ENCODE measurements at regions of chr10 and their contacts with region 1.

Region 1: DNA sequence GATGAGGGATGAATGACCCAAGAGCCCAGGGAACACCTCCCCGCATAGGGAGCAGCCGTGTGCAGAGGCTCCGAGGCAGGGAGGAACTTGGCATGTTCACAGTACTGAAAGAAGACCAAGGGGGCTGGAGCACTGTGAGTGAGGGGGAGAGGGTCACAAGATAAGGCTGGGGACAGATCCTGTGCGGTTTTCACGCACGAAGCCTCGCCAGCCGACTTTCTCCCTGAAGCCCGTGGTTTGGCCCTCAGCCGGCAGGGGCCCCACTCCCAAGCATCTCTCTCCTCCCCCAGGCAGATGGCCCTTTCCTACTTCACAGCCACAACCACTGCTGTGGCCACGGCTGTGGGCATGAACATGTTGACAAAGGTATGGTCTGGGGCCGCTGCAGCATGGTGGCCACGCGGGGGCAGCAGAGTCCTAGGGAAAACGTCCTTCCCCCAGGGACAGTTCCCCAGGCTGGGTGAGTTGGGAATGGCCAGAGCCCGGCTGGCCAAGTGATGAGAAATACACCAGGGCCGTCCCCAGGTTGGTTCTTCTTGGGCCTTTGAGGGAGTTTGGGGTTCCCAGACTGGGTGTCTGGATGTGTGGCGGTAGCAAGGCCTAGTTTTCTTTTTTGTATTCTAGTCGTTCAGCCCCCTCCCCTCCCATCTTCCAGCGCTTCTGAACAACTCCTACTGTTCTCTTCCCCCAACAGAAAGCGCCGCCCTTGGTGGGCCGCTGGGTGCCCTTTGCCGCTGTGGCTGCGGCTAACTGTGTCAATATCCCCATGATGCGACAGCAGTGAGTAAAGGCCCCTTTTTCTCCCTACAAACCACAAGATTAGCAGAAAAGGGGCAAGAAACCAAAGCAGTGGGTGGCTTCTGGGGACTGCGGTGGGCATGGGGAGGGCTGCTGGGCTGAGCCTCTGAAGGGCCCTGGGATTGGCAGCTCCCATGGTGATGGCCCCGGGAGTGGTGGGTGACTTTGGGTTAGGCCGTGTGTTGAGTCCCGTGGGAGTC is 14.4 kb upstream of the WBP1L start:
- DNase-seq: peak; percentile 73
- ATAC-seq: peak; percentile 100
- H3K4me3 ChIP-seq: no peak overlapping the region
- H3K27ac ChIP-seq: no peak overlapping the region
- H3K4me1 ChIP-seq: peaks cover 2% of the 10 kb centered on the region; the same call in 1 of the 2 replicates
- H3K27me3 ChIP-seq: no peaks in the 10 kb centered on the region
- CTCF ChIP-seq: peak; percentile 97
- POLR2A ChIP-seq: no peak
- RAD21 ChIP-seq: peak; percentile 99

Region 2: DNA sequence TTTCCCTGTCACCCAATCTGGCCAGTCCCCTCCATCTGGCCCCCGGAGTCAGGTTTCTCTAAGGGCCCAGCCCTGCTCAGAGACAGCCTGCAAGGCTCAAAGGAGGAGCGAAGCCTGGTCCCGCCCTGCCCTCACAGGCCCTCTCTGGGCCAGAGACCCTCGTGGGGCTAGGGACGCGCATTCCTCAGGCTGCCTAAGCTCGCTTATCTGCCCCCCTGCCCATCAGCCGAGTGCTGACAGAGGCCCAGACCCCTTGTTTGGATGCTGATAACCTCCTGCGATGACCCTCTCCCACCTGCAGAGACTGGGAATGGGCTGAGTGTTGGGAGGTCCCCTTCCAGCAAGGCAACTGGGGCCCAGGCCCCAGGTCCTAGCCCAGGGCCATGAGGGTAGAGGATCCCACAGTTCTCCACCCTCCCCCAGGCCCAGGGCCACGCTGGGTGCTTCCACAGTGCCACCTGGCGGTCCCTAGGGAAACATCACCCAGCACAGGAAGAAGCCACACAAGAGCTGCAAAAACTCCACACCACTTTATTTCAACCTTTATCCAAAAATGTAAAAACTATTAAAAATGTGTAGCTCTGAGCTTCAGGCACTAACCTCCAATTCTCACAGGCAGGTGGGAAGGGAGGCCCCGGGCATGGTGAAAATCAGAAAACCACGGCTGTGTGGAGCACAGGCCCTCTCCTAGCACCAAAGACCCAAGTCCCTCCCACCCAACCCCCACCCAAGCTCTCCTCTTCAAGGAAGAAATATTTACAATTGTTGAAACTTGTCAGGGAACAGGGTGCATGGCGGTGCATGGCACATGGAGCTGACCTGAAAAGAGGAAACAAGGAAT is 948.3 kb before region 1 on chr10:
- CTCF ChIA-PET with region 1: no interaction called
- POLR2A ChIA-PET with region 1: no interaction called
- dilution Hi-C with region 1: no loop called
- in situ Hi-C with region 1: no loop called
- intact Hi-C with region 1: no loop called
- DNase-seq: peak; percentile 64
- ATAC-seq: peak; percentile 76
- H3K4me3 ChIP-seq: no peak overlapping the region
- H3K27ac ChIP-seq: no peak overlapping the region
- H3K4me1 ChIP-seq: peaks cover 11% of the 10 kb centered on the region
- H3K27me3 ChIP-seq: peaks cover 19% of the 10 kb centered on the region
- CTCF ChIP-seq: peak; percentile 93
- POLR2A ChIP-seq: no peak
- RAD21 ChIP-seq: peak; percentile 85

Region 3: GRCh38 chr10:102641880-102642735 is 87.2 kb before region 1 on chr10:
- CTCF ChIA-PET with region 1: no interaction called
- POLR2A ChIA-PET with region 1: no interaction called
- dilution Hi-C with region 1: no loop called
- in situ Hi-C with region 1: no loop called
- intact Hi-C with region 1: no loop called
- DNase-seq: peak; percentile 97
- ATAC-seq: peak; percentile 71
- H3K4me3 ChIP-seq: peak overlapping the region; percentile 77
- H3K27ac ChIP-seq: peak overlapping the region; percentile 95
- H3K4me1 ChIP-seq: peaks cover 2% of the 10 kb centered on the region; the same call in 1 of the 2 replicates
- H3K27me3 ChIP-seq: no peaks in the 10 kb centered on the region
- CTCF ChIP-seq: 0 out of 2 replicates have a peak, but pooled peaks have one; percentile 0
- POLR2A ChIP-seq: peak; percentile 62; the same call in 1 of the 2 replicates
- RAD21 ChIP-seq: no peak

Region 4: GRCh38 chr10:102904346-102904745 is 175.0 kb after region 1 on chr10:
- CTCF ChIA-PET with region 1: interaction called, 10 read pairs
- POLR2A ChIA-PET with region 1: no interaction called
- dilution Hi-C with region 1: no loop called
- in situ Hi-C with region 1: loop called (anchors 5 kb)
- intact Hi-C with region 1: loop called (anchors 1 kb)
- DNase-seq: no peak
- ATAC-seq: no peak
- H3K4me3 ChIP-seq: no peak overlapping the region
- H3K27ac ChIP-seq: no peak overlapping the region
- H3K4me1 ChIP-seq: no peaks in the 10 kb centered on the region
- H3K27me3 ChIP-seq: no peaks in the 10 kb centered on the region
- CTCF ChIP-seq: no peak
- POLR2A ChIP-seq: no peak
- RAD21 ChIP-seq: no peak

Region 5: DNA sequence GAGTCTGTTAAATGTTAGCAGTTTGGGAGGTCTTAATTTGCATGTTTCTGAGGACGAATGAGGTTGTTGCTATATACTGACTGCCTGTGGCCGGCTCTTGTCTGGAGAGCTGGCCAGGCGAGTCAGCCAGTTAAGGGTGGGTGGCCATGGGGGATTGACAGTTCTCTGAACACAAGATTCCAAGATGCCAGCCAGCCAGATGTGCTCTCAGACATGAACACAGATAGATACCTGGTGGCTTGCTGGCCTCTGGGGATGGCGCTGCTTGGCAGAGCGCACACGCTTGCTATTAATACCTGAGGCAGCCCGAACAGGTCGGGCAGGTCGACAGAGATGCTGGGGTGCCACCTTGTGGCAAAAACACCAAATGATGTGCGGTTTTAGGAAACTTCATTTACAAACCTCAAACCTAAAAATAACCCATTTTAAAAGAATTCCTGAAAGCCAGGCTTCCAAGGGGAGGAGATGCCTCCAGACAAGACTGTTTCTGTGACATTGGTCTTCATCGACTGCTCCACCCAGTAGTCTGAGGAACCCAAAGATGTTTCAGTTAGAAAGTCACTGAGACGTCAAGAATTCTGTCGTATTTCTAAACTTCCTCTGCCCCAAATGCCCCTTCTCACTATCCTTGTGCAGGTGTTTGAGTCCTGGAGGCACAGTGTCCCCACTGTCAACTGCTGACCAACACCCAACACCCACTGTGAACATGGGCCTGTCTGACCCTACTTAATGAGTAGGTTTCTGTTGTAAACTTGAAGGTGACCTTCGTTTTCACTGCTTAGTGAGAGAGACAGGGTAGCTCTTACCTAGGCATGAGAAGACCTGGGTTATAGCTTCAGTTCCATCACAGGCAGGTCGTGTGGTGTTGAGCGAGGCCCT is 340.4 kb after region 1 on chr10:
- CTCF ChIA-PET with region 1: no interaction called
- POLR2A ChIA-PET with region 1: no interaction called
- dilution Hi-C with region 1: no loop called
- in situ Hi-C with region 1: loop called (anchors 10 kb)
- intact Hi-C with region 1: loop called (anchors 1 kb)
- DNase-seq: peak; percentile 68
- ATAC-seq: peak; percentile 72
- H3K4me3 ChIP-seq: no peak overlapping the region
- H3K27ac ChIP-seq: no peak overlapping the region
- H3K4me1 ChIP-seq: peaks cover 4% of the 10 kb centered on the region; the same call in 1 of the 2 replicates
- H3K27me3 ChIP-seq: no peaks in the 10 kb centered on the region
- CTCF ChIP-seq: peak; percentile 79
- POLR2A ChIP-seq: no peak
- RAD21 ChIP-seq: peak; percentile 89

Measured in IMR-90 (cell line).